Body of pancreas (tissue), 4 donors: ENCODE measurements at regions of chr4 and their contacts with region 1.

Region 1: GRCh38 chr4:38374791-38375054 is 289.3 kb upstream of the KLF3 start:
- DNase-seq: no peak
- ATAC-seq: no peak
- H3K4me3 ChIP-seq: no peak overlapping the region
- H3K27ac ChIP-seq: no peak overlapping the region
- H3K4me1 ChIP-seq: no peaks in the 10 kb centered on the region
- H3K27me3 ChIP-seq: no peaks in the 10 kb centered on the region
- CTCF ChIP-seq: no peak
- POLR2A ChIP-seq: no peak

Region 2: GRCh38 chr4:37561803-37562207 is 812.9 kb before region 1 on chr4:
- intact Hi-C with region 1: no loop called
- DNase-seq: no peak
- ATAC-seq: no peak
- H3K4me3 ChIP-seq: no peak overlapping the region
- H3K27ac ChIP-seq: no peak overlapping the region
- H3K4me1 ChIP-seq: no peaks in the 10 kb centered on the region
- H3K27me3 ChIP-seq: no peaks in the 10 kb centered on the region
- CTCF ChIP-seq: no peak
- POLR2A ChIP-seq: no peak

Region 3: DNA sequence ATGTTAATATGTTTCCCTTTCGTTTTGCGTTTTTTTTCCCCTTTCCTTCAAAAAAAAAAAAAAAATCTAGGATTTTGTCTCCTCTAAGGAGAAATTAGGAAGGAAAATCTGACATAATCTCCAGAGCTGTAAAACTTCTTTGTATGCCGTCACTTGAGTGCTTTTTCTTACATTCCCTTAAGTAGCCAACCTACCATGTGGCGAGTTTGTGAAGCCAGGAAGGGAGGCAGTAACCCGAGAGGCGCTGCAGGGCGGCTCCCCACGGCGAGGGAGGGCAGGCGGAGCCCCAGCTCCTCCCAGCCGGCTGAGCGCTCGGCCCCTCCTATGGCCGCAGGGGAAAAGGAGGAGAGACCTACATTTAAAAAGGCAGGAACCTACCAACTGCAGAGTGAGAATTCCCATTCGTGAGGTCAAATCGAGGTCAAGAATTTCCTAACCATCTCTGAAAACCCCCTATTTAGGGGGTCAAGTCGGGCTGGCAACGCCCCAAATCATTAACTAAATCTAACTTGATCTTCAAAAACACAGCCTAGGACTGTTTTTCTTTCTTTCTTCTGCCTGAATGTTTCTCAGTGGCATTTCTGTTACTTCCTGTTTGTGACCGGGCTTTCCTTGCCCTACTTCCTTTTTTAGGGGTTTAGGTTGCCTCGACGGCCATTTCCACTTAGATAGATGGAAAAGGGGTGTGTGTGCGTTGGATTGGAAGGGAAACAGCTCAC is 55.8 kb before region 1 on chr4:
- intact Hi-C with region 1: no loop called
- DNase-seq: peak; percentile 89 to 93 (median 91)
- ATAC-seq: peak; percentile 93
- H3K4me3 ChIP-seq: no peak overlapping the region
- H3K27ac ChIP-seq: peak overlapping the region; percentile 56 to 87 (median 82)
- H3K4me1 ChIP-seq: peaks cover 34% of the 10 kb centered on the region
- H3K27me3 ChIP-seq: no peaks in the 10 kb centered on the region
- CTCF ChIP-seq: peak in 1 of 7 experiments; percentile 5
- POLR2A ChIP-seq: peak in 2 of 3 donors; percentile 58 to 62

Region 4: GRCh38 chr4:38328989-38329729 is 45.6 kb before region 1 on chr4:
- intact Hi-C with region 1: loop called (anchors 5 kb)
- DNase-seq: no peak
- ATAC-seq: no peak
- H3K4me3 ChIP-seq: no peak overlapping the region
- H3K27ac ChIP-seq: no peak overlapping the region
- H3K4me1 ChIP-seq: no peaks in the 10 kb centered on the region
- H3K27me3 ChIP-seq: no peaks in the 10 kb centered on the region
- CTCF ChIP-seq: no peak
- POLR2A ChIP-seq: no peak

Region 5: GRCh38 chr4:38620790-38621684 is 246.3 kb after region 1 on chr4:
- intact Hi-C with region 1: no loop called
- DNase-seq: peak; percentile 35 to 79 (median 58)
- ATAC-seq: peak; percentile 95
- H3K4me3 ChIP-seq: no peak overlapping the region
- H3K27ac ChIP-seq: peak overlapping the region; percentile 69 to 83 (median 79)
- H3K4me1 ChIP-seq: peaks cover 27% of the 10 kb centered on the region
- H3K27me3 ChIP-seq: no peaks in the 10 kb centered on the region
- CTCF ChIP-seq: no peak
- POLR2A ChIP-seq: peak in 1 of 3 donors; percentile 27